ENCODE measurements at regions of chr14 and their contacts with region 1.

Region 1: GRCh38 chr14:101628471-101628966 is 67.2 kb downstream of the DIO3 start:
- DNase-seq: peak; percentile 74 to 84 (median 79)
- ATAC-seq: peak; percentile 97
- H3K4me3 ChIP-seq: no peak overlapping the region
- H3K4me1 ChIP-seq: peaks cover 10% of the 10 kb centered on the region
- CTCF ChIP-seq: peak; percentile 99

Region 2: DNA sequence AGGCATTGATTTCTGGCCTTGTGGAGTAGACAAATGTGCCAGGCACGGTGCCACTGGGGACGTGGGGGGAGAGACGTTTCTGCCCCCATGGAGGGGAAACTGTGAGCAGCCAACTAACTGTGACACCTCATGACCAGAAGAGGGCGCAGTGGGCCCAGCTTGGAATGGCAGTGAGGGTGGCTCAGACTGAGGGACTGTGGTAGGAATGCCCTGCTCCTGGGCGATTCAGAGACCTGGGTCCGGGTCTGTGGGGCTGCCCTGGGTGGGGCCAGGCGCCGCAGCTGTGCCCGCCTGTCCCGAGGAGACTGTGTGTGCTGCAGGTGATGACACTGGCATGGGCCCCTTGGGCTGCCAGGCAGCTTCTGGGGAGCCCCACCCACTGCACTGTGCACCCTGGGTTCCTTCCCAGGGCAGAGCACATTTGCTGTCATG is 1244.8 kb before region 1 on chr14:
- intact Hi-C with region 1: loop called in 1 of 2 experiments (anchors 10 kb)
- DNase-seq: peak; percentile 63 to 77 (median 74)
- ATAC-seq: peak; percentile 84
- H3K4me3 ChIP-seq: no peak overlapping the region
- H3K4me1 ChIP-seq: peaks cover 12% of the 10 kb centered on the region
- CTCF ChIP-seq: peak; percentile 65

Region 3: DNA sequence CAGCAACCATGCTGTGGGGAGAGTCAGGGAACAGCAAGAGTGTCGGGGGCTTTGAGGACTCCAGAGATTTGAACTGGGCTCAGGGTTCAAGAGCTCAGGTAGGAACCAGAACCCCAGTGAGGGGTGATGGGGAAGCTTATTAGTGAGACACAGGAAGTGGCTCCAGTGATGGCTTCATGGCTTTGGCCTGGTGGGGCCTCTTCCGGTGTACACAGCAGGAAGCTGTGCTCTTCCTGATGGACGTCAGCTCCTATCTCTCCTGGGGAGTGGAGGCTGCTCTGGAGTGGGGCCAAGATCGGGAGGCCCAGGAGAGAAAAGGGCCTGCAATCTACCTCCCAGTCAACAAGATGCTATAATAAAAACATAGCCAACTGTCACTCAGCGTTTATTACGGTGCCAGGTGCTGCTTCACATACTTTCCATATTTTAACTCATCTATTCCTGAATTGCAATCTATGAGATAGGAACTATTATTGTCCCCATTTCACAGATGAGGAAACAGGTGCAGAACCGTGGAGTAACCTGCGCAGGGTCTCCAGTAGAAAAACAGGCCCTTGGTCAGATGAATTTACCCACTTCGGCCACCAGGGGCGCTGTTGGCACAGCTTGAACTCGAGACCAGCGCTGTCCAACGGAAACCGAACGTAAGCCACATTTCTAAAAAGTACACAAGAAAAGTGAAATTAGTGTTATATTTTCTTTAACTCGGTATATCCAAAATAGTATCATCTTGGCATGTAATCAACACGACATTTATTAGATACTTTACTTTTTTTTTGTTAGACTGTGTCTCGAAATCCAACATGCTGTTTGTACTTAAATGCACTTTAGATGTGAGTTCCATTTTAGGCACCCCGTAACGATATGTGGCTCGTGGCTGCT is 965.4 kb before region 1 on chr14:
- intact Hi-C with region 1: loop called in 1 of 2 experiments (anchors 10 kb)
- DNase-seq: peak; percentile 75 to 81 (median 76)
- ATAC-seq: peak; percentile 65
- H3K4me3 ChIP-seq: no peak overlapping the region
- H3K4me1 ChIP-seq: peaks cover 15% of the 10 kb centered on the region
- CTCF ChIP-seq: peak; percentile 91

Region 4: GRCh38 chr14:100850841-100851585 is 777.5 kb before region 1 on chr14:
- intact Hi-C with region 1: loop called in 1 of 2 experiments (anchors 10 kb)
- DNase-seq: peak; percentile 87 to 95 (median 93)
- ATAC-seq: peak; percentile 100
- H3K4me3 ChIP-seq: no peak overlapping the region
- H3K4me1 ChIP-seq: no peaks in the 10 kb centered on the region
- CTCF ChIP-seq: peak; percentile 83

Region 5: GRCh38 chr14:101335061-101335661 is 293.4 kb before region 1 on chr14:
- intact Hi-C with region 1: no loop called
- DNase-seq: no peak
- ATAC-seq: no peak
- H3K4me3 ChIP-seq: no peak overlapping the region
- H3K4me1 ChIP-seq: no peaks in the 10 kb centered on the region
- CTCF ChIP-seq: no peak

Region 6: DNA sequence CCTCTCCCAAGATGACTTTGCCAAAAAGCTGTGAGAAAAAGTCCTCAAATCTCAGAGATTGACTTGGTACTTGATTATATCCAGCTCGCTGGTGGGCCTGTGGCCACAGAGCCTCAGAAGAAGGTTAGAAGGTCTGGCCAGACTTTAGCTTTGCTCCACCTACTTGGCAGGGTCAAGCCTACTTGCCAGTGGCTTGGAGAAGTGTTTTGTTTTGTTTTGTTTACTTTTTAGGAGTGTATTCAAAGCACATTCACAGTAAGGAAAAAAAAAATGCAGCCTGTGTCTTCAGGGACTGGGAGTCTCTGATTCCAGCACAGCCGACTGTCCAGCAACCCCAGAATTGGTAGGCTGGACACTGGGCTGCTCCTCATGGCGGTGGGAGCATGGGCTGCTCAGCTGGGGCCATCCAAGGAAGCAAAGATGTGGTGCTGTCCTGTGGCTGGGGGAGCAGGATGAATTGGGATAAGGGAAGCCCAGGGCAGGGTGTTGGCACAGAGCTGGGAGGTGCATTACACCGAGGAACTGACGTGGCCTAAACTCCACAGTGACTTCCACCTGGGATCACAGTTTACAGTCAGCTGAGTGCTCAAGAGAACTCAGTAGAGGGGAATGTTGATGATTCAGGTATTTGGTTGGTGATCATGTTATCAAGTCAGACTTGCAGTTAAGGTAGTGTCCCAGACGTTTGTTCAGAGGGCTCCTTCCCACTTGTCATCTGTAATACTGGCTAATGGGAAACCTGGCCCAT is 206.5 kb after region 1 on chr14:
- intact Hi-C with region 1: no loop called
- DNase-seq: peak in 1 of 3 donors; percentile 40
- ATAC-seq: peak; percentile 70
- H3K4me3 ChIP-seq: no peak overlapping the region
- H3K4me1 ChIP-seq: peaks cover 24% of the 10 kb centered on the region
- CTCF ChIP-seq: no peak

Measured in mucosa of descending colon (tissue), 3 donors.